CD14-positive monocyte (primary cell): ENCODE measurements at regions of chr12 and their contacts with region 1.

Region 1: DNA sequence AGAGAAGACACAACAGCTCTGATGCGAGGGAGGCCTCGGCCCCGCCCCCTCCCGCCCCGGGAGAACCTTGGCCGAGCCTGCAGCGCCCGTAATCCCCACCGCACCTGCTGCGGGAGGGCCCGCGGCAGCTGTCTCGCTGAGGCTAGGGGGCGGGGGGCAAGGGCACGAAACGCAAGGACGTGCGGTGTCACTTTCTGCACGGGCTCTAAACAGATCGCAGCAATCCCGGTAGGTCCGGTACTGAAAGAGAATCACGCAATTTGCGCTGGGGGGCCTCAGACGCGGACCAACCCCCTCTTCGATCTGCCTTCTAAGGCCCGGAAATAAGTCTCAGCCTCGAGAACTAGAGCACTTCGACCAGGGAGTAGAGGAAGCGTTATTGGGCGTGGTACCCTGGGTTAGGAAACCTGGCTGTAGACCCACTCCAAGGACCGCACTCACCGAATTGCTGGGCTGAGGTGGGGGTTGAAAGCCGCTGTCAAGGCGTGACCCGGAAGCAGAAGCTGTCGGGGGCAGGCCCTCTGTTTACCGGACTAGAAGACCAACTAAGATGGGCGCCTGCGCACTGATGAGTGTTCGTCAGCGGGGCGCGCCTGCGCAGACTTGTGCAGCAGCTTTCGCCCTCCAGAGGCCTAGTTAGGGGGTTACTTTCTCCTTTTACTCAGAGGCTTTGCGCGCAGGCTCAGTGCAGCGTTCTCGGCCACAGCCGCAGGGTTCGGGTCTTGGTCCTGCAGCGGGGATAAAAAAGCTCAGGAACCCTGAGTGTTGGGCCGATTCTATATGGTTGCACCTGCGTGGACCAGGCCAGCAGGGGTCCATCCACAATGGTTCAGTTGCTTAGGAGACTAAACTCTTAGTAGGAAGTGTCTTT is at the start of gene ASB8:
- DNase-seq: peak; percentile 98 to 100 (median 99)
- H3K4me3 ChIP-seq: peak within 1 kb of the TSS; percentile 72 to 84 (median 82)
- H3K4me3 Mint-ChIP-seq: peak within 1 kb of the TSS; percentile 89 to 96
- H3K27ac ChIP-seq: peak within 1 kb of the TSS; percentile 74 to 88
- H3K27ac Mint-ChIP-seq: peak within 1 kb of the TSS; percentile 92 to 96 (median 94)
- H3K4me1 ChIP-seq: peaks cover 13 to 16% of the 10 kb centered on the region in 2 donors
- H3K4me1 Mint-ChIP-seq: peaks cover 18% of the 10 kb centered on the region
- H3K27me3 ChIP-seq: no peaks in the 10 kb centered on the region
- H3K27me3 Mint-ChIP-seq: no peaks in the 10 kb centered on the region
- CTCF ChIP-seq: peak; percentile 57
- polyA plus RNA-seq, gene ASB8: 23.8 to 50.0 (median 38.4) TPM

Region 2: GRCh38 chr12:47963340-47964040 is 193.8 kb before region 1 on chr12 and contains the start of gene TMEM106C:
- intact Hi-C with region 1: loop called in 1 of 2 experiments (anchors 10 kb)
- DNase-seq: peak; percentile 90 to 92 (median 91)
- H3K4me3 ChIP-seq: peak within 1 kb of the TSS; percentile 61 to 97 (median 87)
- H3K4me3 Mint-ChIP-seq: peak within 1 kb of the TSS; percentile 98
- H3K27ac ChIP-seq: peak within 1 kb of the TSS in 1 of 2 donors; percentile 74
- H3K27ac Mint-ChIP-seq: peak within 1 kb of the TSS in 5 of 7 donors; percentile 18 to 85 (median 68)
- H3K4me1 ChIP-seq: peaks cover 10 to 16% of the 10 kb centered on the region in 2 donors
- H3K4me1 Mint-ChIP-seq: peaks cover 21% of the 10 kb centered on the region
- H3K27me3 ChIP-seq: peaks cover 4 to 10% of the 10 kb centered on the region in 2 donors
- H3K27me3 Mint-ChIP-seq: peaks cover 18 to 30% (median 21%) of the 10 kb centered on the region in 3 donors
- CTCF ChIP-seq: peak; percentile 95
- polyA plus RNA-seq, gene TMEM106C: 8.7 to 9.7 (median 9.0) TPM

Region 3: DNA sequence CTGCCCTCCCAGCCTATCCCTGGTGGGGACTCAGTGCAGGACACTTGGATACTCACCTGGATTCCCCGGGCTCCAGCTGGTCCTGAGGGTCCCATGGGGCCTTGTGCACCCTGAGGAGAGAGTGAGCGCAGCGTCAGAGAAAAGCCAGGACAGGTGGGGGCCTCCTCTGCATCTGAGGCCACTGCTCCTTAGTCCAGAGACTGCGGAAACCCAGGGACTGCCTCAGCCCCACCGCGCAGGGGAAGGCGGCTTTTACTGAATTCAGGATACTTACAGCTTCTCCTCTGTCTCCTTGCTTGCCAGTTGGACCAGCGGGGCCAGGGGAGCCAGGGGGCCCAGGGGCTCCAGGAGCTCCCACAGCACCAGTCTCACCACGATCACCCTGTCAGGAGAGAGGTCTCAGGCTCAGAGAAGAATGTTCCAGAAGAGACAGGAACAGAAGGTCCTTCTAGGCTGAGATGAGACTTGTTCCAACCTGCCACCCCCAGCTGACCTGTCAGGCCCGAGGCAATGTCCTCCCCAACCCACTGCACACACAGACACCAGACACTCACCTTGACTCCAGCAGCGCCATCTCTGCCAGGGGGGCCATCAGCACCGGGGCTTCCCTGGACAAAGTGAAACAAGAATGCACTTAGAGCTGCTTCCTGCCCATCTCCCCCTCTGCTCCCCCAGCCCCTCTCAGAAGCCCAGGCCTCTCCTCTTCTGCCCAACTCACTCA is 180.0 kb before region 1 on chr12:
- intact Hi-C with region 1: no loop called
- DNase-seq: no peak
- H3K4me3 ChIP-seq: no peak overlapping the region
- H3K4me3 Mint-ChIP-seq: peak overlapping the region in 1 of 2 donors; percentile 0
- H3K27ac ChIP-seq: no peak overlapping the region
- H3K27ac Mint-ChIP-seq: peak overlapping the region in 1 of 7 donors; percentile 45
- H3K4me1 ChIP-seq: no peaks in the 10 kb centered on the region
- H3K4me1 Mint-ChIP-seq: no peaks in the 10 kb centered on the region
- H3K27me3 ChIP-seq: no peaks in the 10 kb centered on the region
- H3K27me3 Mint-ChIP-seq: peaks cover 3 to 7% (median 5%) of the 10 kb centered on the region in 3 donors
- CTCF ChIP-seq: no peak

Region 4: DNA sequence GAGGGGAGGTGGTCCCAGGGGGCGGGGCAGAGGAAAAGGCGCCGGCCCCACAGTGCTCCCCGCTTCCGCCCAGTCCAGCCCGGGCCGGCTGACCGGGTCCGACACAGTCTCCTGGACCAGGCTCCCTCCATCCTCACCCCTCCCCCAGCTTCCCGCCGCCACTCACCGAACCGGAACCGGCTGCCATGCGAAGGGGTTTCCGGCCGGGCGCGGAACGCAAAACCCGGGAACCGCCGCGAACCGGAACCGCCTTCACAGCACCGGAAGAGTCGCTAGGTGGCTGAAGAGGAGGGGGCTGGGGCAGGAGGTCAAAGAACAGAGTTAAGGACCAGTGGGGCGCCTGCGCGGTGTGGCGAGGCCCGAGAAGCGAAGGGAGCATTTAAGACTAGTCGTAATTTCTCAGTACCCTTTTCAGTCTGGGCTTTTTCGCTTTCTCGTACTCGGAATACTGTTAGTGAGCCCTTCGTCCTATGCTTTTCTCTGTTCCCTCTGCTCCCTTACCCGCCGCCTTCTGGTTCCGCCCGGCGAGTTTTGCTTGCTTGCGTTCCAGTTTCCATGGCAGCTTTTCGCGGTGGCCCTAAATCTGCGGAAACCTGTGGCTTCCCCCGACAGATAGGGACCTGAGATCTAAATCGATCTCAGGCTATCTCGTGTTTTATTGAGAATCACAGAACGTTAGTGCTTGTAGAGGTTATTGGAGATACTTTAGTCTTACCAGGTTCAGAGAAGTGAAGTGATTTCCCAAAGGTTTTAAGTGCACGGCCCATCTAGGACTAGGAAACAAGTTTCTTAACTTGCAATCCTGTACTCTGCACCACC is 51.2 kb before region 1 on chr12 and contains the start of gene SENP1:
- intact Hi-C with region 1: loop called (anchors 2 to 5 kb)
- DNase-seq: peak; percentile 79 to 88 (median 87)
- H3K4me3 ChIP-seq: peak within 1 kb of the TSS; percentile 65 to 88 (median 79)
- H3K4me3 Mint-ChIP-seq: peak within 1 kb of the TSS; percentile 93
- H3K27ac ChIP-seq: peak within 1 kb of the TSS; percentile 94 to 96
- H3K27ac Mint-ChIP-seq: peak within 1 kb of the TSS; percentile 93 to 99 (median 98)
- H3K4me1 ChIP-seq: peaks cover 16 to 19% of the 10 kb centered on the region in 2 donors
- H3K4me1 Mint-ChIP-seq: peaks cover 21% of the 10 kb centered on the region
- H3K27me3 ChIP-seq: no peaks in the 10 kb centered on the region
- H3K27me3 Mint-ChIP-seq: peaks cover 2 to 4% (median 3%) of the 10 kb centered on the region in 3 donors
- CTCF ChIP-seq: no peak
- polyA plus RNA-seq, gene SENP1: 5.2 to 8.0 (median 6.0) TPM

Region 5: GRCh38 chr12:48197971-48198671 is 40.9 kb after region 1 on chr12:
- intact Hi-C with region 1: loop called in 1 of 2 experiments (anchors 2 kb)
- DNase-seq: peak; percentile 94 to 97 (median 95)
- H3K4me3 ChIP-seq: peak overlapping the region; percentile 78 to 89 (median 79)
- H3K4me3 Mint-ChIP-seq: peak overlapping the region; percentile 92 to 96
- H3K27ac ChIP-seq: peak overlapping the region; percentile 89 to 98
- H3K27ac Mint-ChIP-seq: peak overlapping the region; percentile 97 to 99 (median 98)
- H3K4me1 ChIP-seq: peaks cover 38 to 47% of the 10 kb centered on the region in 2 donors
- H3K4me1 Mint-ChIP-seq: peaks cover 48% of the 10 kb centered on the region
- H3K27me3 ChIP-seq: peaks cover 0 to 15% of the 10 kb centered on the region in 2 donors
- H3K27me3 Mint-ChIP-seq: peaks cover 0 to 14% (median 4%) of the 10 kb centered on the region in 3 donors
- CTCF ChIP-seq: no peak